ENCODE measurements at regions of chr1 and their contacts with region 1.

Region 1: GRCh38 chr1:169072945-169073730 is 33.4 kb upstream of the ATP1B1 start:
- DNase-seq: no peak
- H3K4me3 Mint-ChIP-seq: no peak overlapping the region
- H3K27ac Mint-ChIP-seq: no peak overlapping the region
- H3K4me1 Mint-ChIP-seq: no peaks in the 10 kb centered on the region
- H3K27me3 Mint-ChIP-seq: no peaks in the 10 kb centered on the region
- CTCF ChIP-seq: no peak

Region 2: DNA sequence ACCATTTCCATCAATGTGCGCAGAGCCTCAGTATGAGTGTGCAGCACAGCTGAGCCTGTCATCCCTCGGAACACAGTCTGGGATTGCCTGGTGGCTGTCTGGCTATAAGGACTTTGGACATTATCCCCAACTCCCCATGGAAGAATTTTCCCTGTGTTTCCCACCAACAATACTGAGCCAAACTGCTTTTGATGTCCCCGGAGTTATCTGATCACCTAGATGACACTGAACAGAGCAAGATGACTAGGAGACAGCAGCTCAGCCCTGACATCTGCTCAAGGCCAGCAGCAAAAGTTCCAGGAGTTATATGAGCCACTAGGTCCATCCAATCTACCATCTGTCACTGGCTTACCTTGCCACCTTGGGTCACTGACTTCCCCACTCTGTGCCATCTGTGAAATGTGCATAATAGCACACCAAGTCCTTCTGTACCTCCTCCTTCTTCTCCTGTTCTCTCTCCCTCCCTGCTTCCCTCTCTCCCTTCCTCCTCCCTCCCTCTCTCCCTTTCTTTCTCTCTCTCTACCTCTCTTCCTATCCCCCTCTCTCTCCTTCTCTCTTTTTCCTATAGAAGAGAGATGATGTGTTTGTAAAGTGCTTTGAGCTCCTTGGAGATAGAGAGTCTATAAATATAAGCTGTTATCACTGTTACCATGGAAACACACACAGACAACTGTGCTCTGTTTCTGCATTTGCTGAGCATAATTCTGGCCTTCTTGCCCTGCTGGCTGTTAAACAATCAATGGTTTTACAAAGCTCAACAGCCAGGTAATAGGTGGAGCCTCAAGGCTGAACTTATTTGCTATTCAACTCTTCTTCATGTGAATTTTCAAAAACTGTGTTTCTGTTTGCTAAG is 13.7 kb after region 1 on chr1:
- CTCF ChIA-PET with region 1: interaction called, 11 read pairs
- POLR2A ChIA-PET with region 1: interaction called, 3 read pairs
- intact Hi-C with region 1: no loop called
- DNase-seq: no peak
- H3K4me3 Mint-ChIP-seq: no peak overlapping the region
- H3K27ac Mint-ChIP-seq: no peak overlapping the region
- H3K4me1 Mint-ChIP-seq: no peaks in the 10 kb centered on the region
- H3K27me3 Mint-ChIP-seq: no peaks in the 10 kb centered on the region
- CTCF ChIP-seq: no peak

Measured in MCF 10A (cell line).